ENCODE measurements at regions of chr6 and their contacts with region 1.

Region 1: DNA sequence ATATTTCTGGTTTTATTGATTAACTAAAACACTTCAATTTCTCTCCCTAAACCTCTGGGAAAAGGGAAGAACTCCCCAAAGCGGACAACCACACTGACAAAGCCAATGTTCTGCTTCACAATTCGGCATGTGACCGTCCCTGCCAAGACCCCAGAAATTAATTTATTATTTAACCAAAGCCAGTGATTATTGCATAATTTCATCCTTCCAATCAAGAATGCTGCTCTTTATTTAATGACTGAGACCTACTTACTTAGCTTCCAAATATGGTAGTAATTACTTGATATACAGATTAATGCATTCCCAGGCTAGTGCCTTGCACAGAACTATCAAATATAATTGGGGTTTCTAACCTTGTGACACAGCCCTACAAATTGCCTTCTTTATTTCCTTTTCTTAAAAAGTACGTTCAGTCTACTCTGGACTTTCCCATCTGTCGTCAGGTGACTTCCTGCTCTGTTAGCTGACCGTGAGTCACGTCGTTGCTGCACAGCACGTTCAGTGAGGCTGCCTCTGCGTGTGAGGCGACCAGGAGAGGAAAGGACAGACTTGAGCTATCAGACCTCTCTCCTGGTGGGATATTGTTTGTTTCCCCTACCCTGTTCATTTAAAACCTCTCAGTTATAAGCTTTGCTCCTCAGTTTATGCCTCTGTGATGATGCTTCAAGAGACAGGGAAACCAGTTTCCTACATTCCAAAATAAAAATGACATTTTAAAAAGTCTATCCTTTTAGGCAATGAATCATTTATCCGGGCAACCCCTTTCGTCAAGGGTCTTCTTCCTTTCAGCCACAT is 55.7 kb upstream of the TNFAIP3 start:
- DNase-seq: peak; percentile 98 to 100 (median 99)
- H3K4me3 ChIP-seq: peak overlapping the region in 1 of 3 experiments; percentile 10
- H3K4me3 Mint-ChIP-seq: peak overlapping the region; percentile 20 to 81
- H3K27ac ChIP-seq: peak overlapping the region; percentile 80 to 97
- H3K27ac Mint-ChIP-seq: peak overlapping the region; percentile 98 to 99 (median 99)
- H3K4me1 ChIP-seq: peaks cover 29 to 33% of the 10 kb centered on the region in 2 donors
- H3K4me1 Mint-ChIP-seq: peaks cover 27% of the 10 kb centered on the region
- H3K27me3 ChIP-seq: no peaks in the 10 kb centered on the region
- H3K27me3 Mint-ChIP-seq: peaks cover 0 to 1% (median 0%) of the 10 kb centered on the region in 3 donors
- CTCF ChIP-seq: no peak

Region 2: DNA sequence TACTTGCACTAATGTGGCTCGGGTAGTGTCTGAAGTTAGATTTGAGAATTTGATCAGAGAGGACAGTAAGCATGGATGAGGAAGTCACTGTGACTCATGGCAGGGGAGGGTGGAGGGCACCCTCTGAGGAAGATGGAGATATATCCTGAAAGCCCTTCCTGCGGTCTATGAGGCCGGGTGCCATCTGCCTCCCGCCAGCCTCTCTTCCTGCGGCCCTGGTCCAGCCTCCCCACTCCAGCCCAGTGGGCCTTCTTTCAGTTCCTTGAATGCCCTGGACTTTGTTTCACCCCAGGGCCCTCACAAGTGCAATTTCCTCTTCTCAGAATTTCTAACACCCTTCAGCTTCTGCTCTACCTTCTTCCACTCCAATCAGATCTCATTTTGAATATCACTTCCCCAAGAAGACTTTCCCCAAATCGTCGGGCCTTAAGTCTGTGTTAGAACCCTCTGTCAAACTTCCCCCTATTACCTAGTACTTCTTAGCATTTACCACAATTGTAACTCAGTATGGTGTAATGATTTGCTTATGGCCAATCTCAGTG is 35.5 kb after region 1 on chr6:
- intact Hi-C with region 1: loop called in 1 of 2 experiments (anchors 5 kb)
- DNase-seq: peak; percentile 95 to 98 (median 97)
- H3K4me3 ChIP-seq: peak overlapping the region in 1 of 3 experiments; percentile 49
- H3K4me3 Mint-ChIP-seq: no peak overlapping the region
- H3K27ac ChIP-seq: peak overlapping the region; percentile 78 to 95
- H3K27ac Mint-ChIP-seq: no peak overlapping the region
- H3K4me1 ChIP-seq: peaks cover 47 to 63% of the 10 kb centered on the region in 2 donors
- H3K4me1 Mint-ChIP-seq: peaks cover 22% of the 10 kb centered on the region
- H3K27me3 ChIP-seq: no peaks in the 10 kb centered on the region
- H3K27me3 Mint-ChIP-seq: no peaks in the 10 kb centered on the region
- CTCF ChIP-seq: no peak